Breast epithelium (tissue), 4 donors: ENCODE measurements at regions of chr10 and their contacts with region 1.

Region 1: GRCh38 chr10:112768121-112768520 is 181.9 kb upstream of the TCF7L2 start:
- DNase-seq: no peak
- H3K4me3 ChIP-seq: no peak overlapping the region
- H3K27ac ChIP-seq: no peak overlapping the region
- H3K4me1 ChIP-seq: no peaks in the 10 kb centered on the region
- H3K27me3 ChIP-seq: no peaks in the 10 kb centered on the region
- CTCF ChIP-seq: no peak
- POLR2A ChIP-seq: no peak

Region 2: GRCh38 chr10:112716924-112717413 is 51.2 kb before region 1 on chr10:
- intact Hi-C with region 1: loop called (anchors 2 kb)
- DNase-seq: no peak
- H3K4me3 ChIP-seq: no peak overlapping the region
- H3K27ac ChIP-seq: no peak overlapping the region
- H3K4me1 ChIP-seq: no peaks in the 10 kb centered on the region
- H3K27me3 ChIP-seq: no peaks in the 10 kb centered on the region
- CTCF ChIP-seq: no peak
- POLR2A ChIP-seq: no peak